ENCODE measurements at regions of chr12 and their contacts with region 1.

Region 1: GRCh38 chr12:17076028-17076744 is 470.2 kb upstream of the LMO3 start:
- DNase-seq: peak in 1 of 2 experiments; percentile 55
- H3K4me3 ChIP-seq: no peak overlapping the region
- H3K4me3 Mint-ChIP-seq: no peak overlapping the region
- H3K27ac Mint-ChIP-seq: no peak overlapping the region
- H3K4me1 ChIP-seq: peaks cover 6% of the 10 kb centered on the region; the same call in 1 of the 2 replicates
- H3K4me1 Mint-ChIP-seq: peaks cover 7% of the 10 kb centered on the region
- H3K27me3 ChIP-seq: no peaks in the 10 kb centered on the region
- H3K27me3 Mint-ChIP-seq: no peaks in the 10 kb centered on the region
- CTCF ChIP-seq: no peak

Region 2: GRCh38 chr12:17035372-17035771 is 40.8 kb before region 1 on chr12:
- CTCF ChIA-PET with region 1: no interaction called
- POLR2A ChIA-PET with region 1: no interaction called
- intact Hi-C with region 1: loop called (anchors 5 kb)
- DNase-seq: no peak
- H3K4me3 ChIP-seq: no peak overlapping the region
- H3K4me3 Mint-ChIP-seq: no peak overlapping the region
- H3K27ac Mint-ChIP-seq: no peak overlapping the region
- H3K4me1 ChIP-seq: peaks cover 16% of the 10 kb centered on the region
- H3K4me1 Mint-ChIP-seq: peaks cover 13% of the 10 kb centered on the region
- H3K27me3 ChIP-seq: no peaks in the 10 kb centered on the region
- H3K27me3 Mint-ChIP-seq: peaks cover 3% of the 10 kb centered on the region
- CTCF ChIP-seq: no peak

Region 3: GRCh38 chr12:17588968-17589367 is 512.8 kb after region 1 on chr12:
- CTCF ChIA-PET with region 1: no interaction called
- POLR2A ChIA-PET with region 1: no interaction called
- intact Hi-C with region 1: loop called (anchors 1 kb)
- DNase-seq: peak; percentile 52 to 56
- H3K4me3 ChIP-seq: no peak overlapping the region
- H3K4me3 Mint-ChIP-seq: no peak overlapping the region
- H3K27ac Mint-ChIP-seq: no peak overlapping the region
- H3K4me1 ChIP-seq: no peaks in the 10 kb centered on the region
- H3K4me1 Mint-ChIP-seq: no peaks in the 10 kb centered on the region
- H3K27me3 ChIP-seq: no peaks in the 10 kb centered on the region
- H3K27me3 Mint-ChIP-seq: peaks cover 5% of the 10 kb centered on the region
- CTCF ChIP-seq: peak; percentile 77 to 81

Measured in Caco-2 (cell line).